Right cardiac atrium (tissue), 5 donors: ENCODE measurements at regions of chr5 and their contacts with region 1.

Region 1: DNA sequence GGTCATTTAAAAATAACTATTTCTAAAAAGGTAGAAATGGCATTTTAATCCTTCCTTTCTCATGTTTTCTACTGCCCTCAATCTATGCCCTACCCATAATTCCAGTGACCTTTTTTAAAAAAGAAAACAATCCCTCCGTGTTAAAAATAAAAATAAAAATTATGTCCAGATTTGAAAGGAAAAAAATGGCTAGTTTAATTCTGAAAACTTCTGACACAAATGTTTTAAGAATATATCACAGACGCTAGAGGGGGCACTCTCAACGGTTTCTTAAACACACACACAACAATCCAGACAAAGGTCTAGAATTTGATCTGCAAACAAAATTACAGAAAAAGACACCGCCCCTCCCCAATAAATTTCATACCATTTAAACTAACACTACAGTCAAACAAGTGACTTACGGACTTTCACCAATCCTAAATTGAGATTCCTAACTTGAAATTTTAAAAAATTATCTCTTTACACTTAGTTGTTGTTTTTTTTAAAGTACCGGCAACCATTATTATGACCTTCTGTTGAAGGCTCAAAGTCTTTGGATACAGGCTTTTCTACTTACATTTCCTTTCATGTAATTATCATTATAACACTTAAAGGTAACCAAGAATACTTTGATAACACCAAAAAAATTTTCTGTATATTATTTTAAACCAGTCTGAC is 38.2 kb downstream of the CLINT1 start:
- DNase-seq: no peak
- ATAC-seq: no peak
- H3K4me3 ChIP-seq: no peak overlapping the region
- H3K27ac ChIP-seq: no peak overlapping the region
- H3K4me1 ChIP-seq: peaks cover 2% of the 10 kb centered on the region
- H3K27me3 ChIP-seq: no peaks in the 10 kb centered on the region

Region 2: DNA sequence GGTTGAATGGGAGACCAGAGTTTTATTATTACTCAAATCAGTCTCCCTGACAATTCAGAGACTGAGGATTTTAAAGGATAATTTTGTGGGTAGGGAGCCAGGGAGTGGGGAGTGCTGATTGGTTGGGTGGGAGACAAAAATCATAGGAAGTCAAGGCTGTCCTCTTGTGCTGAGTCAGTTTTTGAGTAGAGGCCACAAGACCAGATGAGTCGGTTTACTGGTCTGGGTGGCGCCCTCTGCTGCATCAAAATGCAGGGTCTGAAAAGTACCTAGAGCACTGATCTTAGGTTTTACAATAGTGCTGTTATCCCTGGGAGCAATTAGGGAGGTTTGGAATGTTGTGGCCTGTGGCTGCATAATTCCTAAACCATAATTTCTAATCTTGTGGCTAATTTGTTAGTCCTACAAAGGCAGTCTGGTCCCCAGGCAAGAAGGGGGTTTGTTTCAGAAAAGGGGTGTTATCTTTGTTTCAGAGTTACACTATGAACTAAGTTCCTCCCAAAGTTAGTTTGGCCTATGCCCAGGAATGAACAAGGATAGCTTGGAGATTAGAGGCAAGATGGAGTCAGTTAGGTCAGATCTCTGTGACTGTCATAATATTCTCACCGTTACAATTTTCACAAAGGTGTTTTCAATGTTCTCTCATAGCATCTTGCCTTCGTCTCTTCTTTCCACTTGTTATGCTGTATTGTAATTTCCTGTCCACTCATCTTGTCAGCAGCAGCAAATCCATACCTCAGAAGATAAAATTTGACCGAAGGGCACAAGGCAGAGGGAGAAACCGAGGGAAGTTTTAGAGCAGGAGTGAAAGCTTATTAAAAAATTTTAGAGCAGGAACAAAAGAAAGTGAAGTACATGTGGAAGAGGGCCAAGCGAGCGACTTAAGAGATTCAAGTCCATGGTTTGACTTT is 97.4 kb after region 1 on chr5:
- intact Hi-C with region 1: loop called in 1 of 4 experiments (anchors 10 kb)
- DNase-seq: peak; percentile 70 to 87 (median 77)
- ATAC-seq: peak; percentile 32 to 58
- H3K4me3 ChIP-seq: no peak overlapping the region
- H3K27ac ChIP-seq: no peak overlapping the region
- H3K4me1 ChIP-seq: peaks cover 9% of the 10 kb centered on the region
- H3K27me3 ChIP-seq: no peaks in the 10 kb centered on the region

Region 3: GRCh38 chr5:157948738-157949410 is 128.2 kb after region 1 on chr5:
- intact Hi-C with region 1: loop called in 1 of 4 experiments (anchors 10 kb)
- DNase-seq: peak; percentile 86 to 94 (median 89)
- ATAC-seq: peak; percentile 98 to 99
- H3K4me3 ChIP-seq: peak overlapping the region; percentile 10
- H3K27ac ChIP-seq: no peak overlapping the region
- H3K4me1 ChIP-seq: no peaks in the 10 kb centered on the region
- H3K27me3 ChIP-seq: no peaks in the 10 kb centered on the region

Region 4: GRCh38 chr5:157994906-157995519 is 174.3 kb after region 1 on chr5:
- intact Hi-C with region 1: loop called (anchors 5 to 10 kb)
- DNase-seq: peak; percentile 65 to 84 (median 79)
- ATAC-seq: peak; percentile 94 to 96
- H3K4me3 ChIP-seq: no peak overlapping the region
- H3K27ac ChIP-seq: no peak overlapping the region
- H3K4me1 ChIP-seq: no peaks in the 10 kb centered on the region
- H3K27me3 ChIP-seq: no peaks in the 10 kb centered on the region

Region 5: GRCh38 chr5:158074992-158075769 is 254.5 kb after region 1 on chr5:
- intact Hi-C with region 1: no loop called
- DNase-seq: peak; percentile 52 to 79 (median 65)
- ATAC-seq: peak; percentile 90 to 91
- H3K4me3 ChIP-seq: peak overlapping the region; percentile 69
- H3K27ac ChIP-seq: peak overlapping the region; percentile 45
- H3K4me1 ChIP-seq: no peaks in the 10 kb centered on the region
- H3K27me3 ChIP-seq: no peaks in the 10 kb centered on the region

Region 6: GRCh38 chr5:159106569-159107282 is 1286.0 kb after region 1 on chr5:
- intact Hi-C with region 1: loop called in 1 of 4 experiments (anchors 10 kb)
- DNase-seq: peak; percentile 84 to 94 (median 89)
- ATAC-seq: peak; percentile 89
- H3K4me3 ChIP-seq: peak overlapping the region; percentile 36
- H3K27ac ChIP-seq: no peak overlapping the region
- H3K4me1 ChIP-seq: no peaks in the 10 kb centered on the region
- H3K27me3 ChIP-seq: no peaks in the 10 kb centered on the region

Region 7: GRCh38 chr5:159133041-159133741 is 1312.5 kb after region 1 on chr5:
- intact Hi-C with region 1: loop called in 1 of 4 experiments (anchors 10 kb)
- DNase-seq: peak in 2 of 3 donors; percentile 37 to 42
- ATAC-seq: peak; percentile 79
- H3K4me3 ChIP-seq: no peak overlapping the region
- H3K27ac ChIP-seq: no peak overlapping the region
- H3K4me1 ChIP-seq: no peaks in the 10 kb centered on the region
- H3K27me3 ChIP-seq: no peaks in the 10 kb centered on the region